Motor neuron (in vitro differentiated cells): ENCODE measurements at regions of chr18 and their contacts with region 1.

Region 1: GRCh38 chr18:56575819-56576663 is 62.4 kb downstream of the TXNL1 start:
- ATAC-seq: peak; percentile 58 to 87 (median 73)
- H3K4me3 ChIP-seq: no peak overlapping the region
- H3K27ac ChIP-seq: no peak overlapping the region
- H3K4me1 ChIP-seq: no peaks in the 10 kb centered on the region

Region 2: GRCh38 chr18:55234366-55235093 is 1341.5 kb before region 1 on chr18:
- in situ Hi-C with region 1: loop called in 5 of 9 experiments (anchors 10 to 25 kb)
- ATAC-seq: peak; percentile 77 to 92 (median 84)
- H3K4me3 ChIP-seq: no peak overlapping the region
- H3K27ac ChIP-seq: no peak overlapping the region
- H3K4me1 ChIP-seq: peaks cover 0 to 2% of the 10 kb centered on the region in 2 donors

Region 3: DNA sequence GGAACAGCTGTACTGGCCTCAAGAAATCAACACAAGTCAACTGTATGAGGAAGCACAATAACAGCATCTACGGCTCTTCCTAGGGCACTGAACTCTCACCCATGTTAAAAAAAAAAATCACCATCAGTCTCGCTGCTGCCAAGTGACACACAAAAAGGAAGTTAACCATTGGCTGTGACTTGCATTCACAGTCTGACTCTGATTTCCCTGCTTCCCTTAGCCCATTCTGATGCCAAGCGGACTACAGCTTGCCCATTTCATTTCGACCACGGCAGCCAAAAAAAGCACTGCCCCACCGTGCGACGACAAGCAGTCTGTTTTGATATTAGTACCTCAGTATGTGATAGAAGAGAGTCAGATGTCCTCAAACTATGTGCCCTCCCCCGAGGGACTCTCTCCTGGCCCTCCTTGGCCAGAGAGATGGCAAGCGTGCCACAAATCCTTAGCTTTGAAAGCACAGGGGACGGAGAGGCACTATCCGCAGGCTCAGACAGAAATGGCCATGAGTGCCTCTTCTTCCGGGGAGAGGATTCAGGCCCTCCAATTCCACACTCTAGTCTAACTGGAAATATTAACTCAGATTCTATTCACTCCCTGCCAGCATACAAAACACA is 1238.0 kb before region 1 on chr18:
- in situ Hi-C with region 1: loop called in 1 of 9 experiments (anchors 10 kb)
- ATAC-seq: peak in 5 of 8 experiments; percentile 33 to 60 (median 52)
- H3K4me3 ChIP-seq: no peak overlapping the region
- H3K27ac ChIP-seq: no peak overlapping the region
- H3K4me1 ChIP-seq: peaks cover 9 to 19% of the 10 kb centered on the region in 2 donors

Region 4: DNA sequence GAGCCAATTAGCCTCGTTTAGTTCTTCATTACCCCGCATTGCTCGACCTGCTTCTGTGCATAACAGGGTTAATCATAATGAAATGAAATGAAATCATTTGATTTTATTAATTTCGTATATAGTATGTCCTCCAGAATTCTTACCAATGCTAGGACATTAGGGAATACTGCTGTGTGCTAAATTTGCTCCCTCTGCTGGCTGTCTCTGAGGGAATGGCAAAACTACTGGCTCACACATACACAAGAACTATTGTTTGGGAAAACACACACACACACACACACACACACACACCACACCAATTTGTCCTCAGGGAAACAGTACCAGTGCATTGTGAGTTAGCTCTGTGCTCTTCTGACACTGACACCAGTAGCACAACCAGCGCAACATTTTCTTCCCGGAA is 714.8 kb before region 1 on chr18:
- in situ Hi-C with region 1: no loop called
- ATAC-seq: peak in 2 of 8 experiments; percentile 10 to 15
- H3K4me3 ChIP-seq: no peak overlapping the region
- H3K27ac ChIP-seq: no peak overlapping the region
- H3K4me1 ChIP-seq: peaks cover 3 to 14% of the 10 kb centered on the region in 2 donors